Right ventricle myocardium superior (tissue), 1 donor: ENCODE measurements at regions of chr6 and their contacts with region 1.

Region 1: DNA sequence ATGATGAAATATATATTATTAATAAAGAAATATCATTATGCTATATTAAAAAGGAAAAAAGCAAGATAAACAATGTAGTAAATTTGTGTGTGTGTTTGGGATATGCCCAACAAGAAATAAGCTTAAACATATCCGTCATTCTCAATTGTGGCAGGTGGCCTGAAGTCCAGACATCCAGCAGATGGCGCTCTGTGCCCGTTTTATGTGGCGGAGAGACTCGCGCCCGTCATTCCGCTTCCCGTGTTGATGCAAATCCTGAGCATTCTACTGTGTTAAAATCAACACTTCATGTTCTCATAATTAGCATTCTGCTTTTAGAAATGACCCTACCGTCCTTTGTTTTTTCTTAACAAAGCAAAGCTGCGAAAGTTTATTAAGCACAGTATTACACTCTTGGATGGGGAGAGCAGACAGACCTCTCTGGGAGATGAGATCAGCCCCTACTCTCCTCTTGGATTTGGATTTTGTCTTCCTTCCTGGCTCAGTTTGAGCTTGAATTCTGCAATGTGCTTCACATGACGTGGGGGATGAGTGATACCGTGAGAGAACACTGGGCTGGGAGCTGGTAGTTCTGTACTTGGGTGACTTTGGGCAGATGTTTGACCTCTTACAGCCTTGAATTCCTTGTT is 125.8 kb downstream of the MCHR2 start:
- DNase-seq: peak; percentile 80
- ATAC-seq: peak; percentile 80

Region 2: DNA sequence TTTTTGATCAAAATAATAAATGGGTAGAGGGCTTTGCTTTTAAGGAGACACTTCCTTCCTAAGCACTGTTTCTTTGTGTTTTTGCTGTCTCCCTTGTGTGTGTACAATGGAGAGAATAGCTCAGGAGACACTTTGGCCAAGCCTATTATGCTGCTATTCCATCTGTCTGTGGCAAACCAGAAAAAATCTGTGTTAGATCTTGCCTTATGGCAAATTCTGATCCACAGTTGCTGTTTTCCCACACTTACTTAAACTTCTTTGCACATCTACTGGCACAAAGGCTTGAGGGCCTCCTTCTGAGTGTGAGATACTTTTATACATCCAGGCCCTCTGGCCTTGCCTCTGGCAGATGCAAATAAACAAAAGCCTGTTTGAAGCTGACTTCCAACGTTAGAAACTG is 208.0 kb before region 1 on chr6:
- intact Hi-C with region 1: no loop called
- DNase-seq: no peak
- ATAC-seq: no peak

Region 3: DNA sequence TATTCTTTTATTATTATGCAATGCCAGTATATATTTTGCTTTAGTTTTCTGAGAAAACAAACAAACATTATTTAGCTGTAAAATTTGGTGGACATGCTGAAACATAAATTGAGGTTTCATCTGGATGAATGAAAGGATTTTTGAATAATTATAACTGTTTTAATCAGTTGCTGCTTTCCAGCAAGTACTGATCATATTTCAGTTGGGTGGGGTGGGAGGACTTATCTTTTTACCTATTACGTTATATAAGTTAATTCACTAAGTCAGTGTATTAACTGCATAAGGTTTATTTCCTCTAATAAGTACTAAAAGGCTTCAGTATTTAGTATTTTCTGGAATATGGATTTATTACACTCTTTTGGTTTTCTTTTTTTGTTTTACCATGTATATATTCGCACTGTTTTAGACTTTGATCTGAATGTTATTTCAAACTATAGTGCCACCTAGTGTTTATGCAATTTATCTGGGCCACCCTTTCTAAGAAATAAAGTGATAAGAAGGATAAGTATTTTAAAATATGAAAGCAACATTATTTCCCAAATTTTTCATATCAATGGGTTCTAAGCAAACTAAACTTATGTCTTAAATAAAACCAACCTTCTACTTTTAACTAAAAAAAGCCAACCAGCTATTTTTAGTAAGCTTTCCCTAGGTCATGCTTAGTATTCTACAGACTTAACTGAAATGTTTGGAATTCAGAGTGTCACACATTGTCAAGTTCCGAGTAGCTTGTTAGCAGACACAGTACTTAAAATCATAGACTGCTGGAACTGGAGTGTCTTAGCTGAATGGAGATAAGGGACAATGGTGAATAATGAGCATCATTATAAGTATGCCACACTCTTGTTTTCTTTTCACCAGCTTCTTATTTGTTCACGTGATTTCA is 231.2 kb after region 1 on chr6:
- intact Hi-C with region 1: loop called (anchors 5 kb)
- DNase-seq: no peak
- ATAC-seq: no peak